ENCODE measurements at regions of chr17 and their contacts with region 1.

Region 1: DNA sequence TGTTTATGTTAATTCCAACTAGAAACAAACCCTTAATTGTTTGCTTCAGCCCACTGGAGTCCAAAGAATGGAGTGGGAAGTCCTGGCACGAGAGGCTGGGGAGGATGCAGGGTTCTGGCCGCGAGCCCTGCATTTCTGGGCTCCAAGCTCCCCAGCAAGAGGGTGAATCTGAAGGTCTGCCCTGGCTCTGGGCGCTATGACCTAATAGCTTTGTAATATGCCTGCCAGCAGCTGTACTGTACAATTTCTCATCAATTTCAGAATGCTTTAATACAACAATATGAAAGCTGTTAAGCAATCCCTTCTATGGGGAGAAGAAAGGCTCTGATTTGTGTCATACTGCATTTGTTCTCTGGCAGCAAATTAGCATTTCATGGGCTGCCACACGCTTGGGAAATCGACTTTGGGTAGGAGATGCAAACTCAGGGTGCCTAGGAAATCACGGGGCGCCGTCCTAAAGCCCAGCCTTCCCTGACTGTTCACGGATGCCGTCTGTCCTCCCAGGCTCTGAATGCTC is 43.8 kb downstream of the NDEL1 start:
- DNase-seq: no peak
- H3K4me3 ChIP-seq: no peak overlapping the region
- H3K27ac ChIP-seq: peak overlapping the region; percentile 46 to 74 (median 72)
- H3K4me1 ChIP-seq: peaks cover 13 to 34% (median 21%) of the 10 kb centered on the region in 4 donors
- H3K27me3 ChIP-seq: no peaks in the 10 kb centered on the region
- CTCF ChIP-seq: no peak
- EP300 ChIP-seq: no peak
- POLR2A ChIP-seq: no peak

Region 2: DNA sequence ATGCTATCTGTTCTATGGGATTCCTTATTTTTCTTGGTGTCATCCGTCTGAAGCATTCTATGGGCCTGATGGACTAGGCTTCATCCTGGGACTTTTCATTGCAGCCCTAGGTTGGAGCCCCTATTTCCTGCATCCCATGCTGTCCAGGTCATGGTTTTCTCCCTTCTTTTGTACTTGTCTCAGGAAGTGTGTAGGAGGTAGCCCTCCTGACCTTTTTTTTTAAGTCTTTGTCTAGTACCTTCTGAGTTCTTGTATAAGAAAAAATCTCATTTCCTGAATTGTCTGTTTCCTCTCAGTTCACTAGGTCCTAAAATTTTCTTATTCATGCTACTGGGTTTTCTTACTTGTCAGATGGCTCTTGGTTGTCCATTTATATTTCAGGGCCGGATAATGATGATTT is 37.8 kb before region 1 on chr17:
- intact Hi-C with region 1: loop called (anchors 5 kb)
- DNase-seq: no peak
- H3K4me3 ChIP-seq: no peak overlapping the region
- H3K27ac ChIP-seq: no peak overlapping the region
- H3K4me1 ChIP-seq: peaks cover 51 to 67% (median 52%) of the 10 kb centered on the region in 4 donors
- H3K27me3 ChIP-seq: no peaks in the 10 kb centered on the region
- CTCF ChIP-seq: no peak
- EP300 ChIP-seq: no peak
- POLR2A ChIP-seq: no peak

Region 3: GRCh38 chr17:8542599-8543502 is 63.4 kb after region 1 on chr17:
- intact Hi-C with region 1: no loop called
- DNase-seq: peak; percentile 60
- H3K4me3 ChIP-seq: no peak overlapping the region
- H3K27ac ChIP-seq: no peak overlapping the region
- H3K4me1 ChIP-seq: peaks cover 0 to 4% (median 0%) of the 10 kb centered on the region in 4 donors
- H3K27me3 ChIP-seq: no peaks in the 10 kb centered on the region
- CTCF ChIP-seq: no peak
- EP300 ChIP-seq: no peak
- POLR2A ChIP-seq: no peak

Measured in esophagus muscularis mucosa (tissue), 4 donors.